A673 (cell line): ENCODE measurements at regions of chr2 and their contacts with region 1.

Region 1: DNA sequence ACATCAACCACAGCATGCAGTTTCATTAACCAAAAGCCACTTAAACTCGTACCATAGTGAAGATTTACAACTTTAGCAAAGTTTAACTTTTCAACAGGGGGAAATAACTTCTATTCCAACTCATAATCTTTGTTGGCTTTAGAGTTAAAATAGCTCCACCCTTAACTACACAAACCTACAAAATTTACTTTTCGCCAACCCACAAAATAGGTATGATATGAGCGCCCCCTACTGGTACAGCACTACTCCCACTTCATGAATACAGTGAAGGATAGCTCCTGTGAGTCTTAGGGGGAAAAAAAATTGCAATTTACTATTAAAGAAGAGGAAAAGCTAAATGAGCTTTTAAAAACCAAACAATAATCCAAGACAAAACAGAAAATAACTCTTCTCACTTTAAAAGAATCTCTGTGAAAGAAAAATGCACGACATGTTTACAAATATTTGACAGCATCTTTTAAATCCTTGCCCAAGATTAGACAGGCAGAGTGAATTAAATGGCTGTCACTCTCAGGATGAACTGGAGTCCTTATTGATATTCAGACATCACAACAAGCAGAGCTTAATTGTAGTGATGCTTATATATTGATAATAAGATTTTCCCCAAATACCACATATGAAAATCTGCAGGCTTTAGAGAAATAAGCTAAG is 32.2 kb downstream of the TMEFF2 start:
- DNase-seq: peak; percentile 87
- H3K4me3 ChIP-seq: no peak overlapping the region
- H3K27ac ChIP-seq: peak overlapping the region; percentile 18
- H3K4me1 ChIP-seq: peaks cover 20% of the 10 kb centered on the region
- H3K27me3 ChIP-seq: no peaks in the 10 kb centered on the region
- CTCF ChIP-seq: peak; percentile 96

Region 2: GRCh38 chr2:191555092-191555742 is 607.3 kb before region 1 on chr2:
- CTCF ChIA-PET with region 1: interaction called, 3 read pairs
- POLR2A ChIA-PET with region 1: no interaction called
- intact Hi-C with region 1: loop called (anchors 1 kb)
- DNase-seq: peak; percentile 90
- H3K4me3 ChIP-seq: no peak overlapping the region
- H3K27ac ChIP-seq: no peak overlapping the region
- H3K4me1 ChIP-seq: peaks cover 4% of the 10 kb centered on the region
- H3K27me3 ChIP-seq: no peaks in the 10 kb centered on the region
- CTCF ChIP-seq: peak; percentile 74

Region 3: DNA sequence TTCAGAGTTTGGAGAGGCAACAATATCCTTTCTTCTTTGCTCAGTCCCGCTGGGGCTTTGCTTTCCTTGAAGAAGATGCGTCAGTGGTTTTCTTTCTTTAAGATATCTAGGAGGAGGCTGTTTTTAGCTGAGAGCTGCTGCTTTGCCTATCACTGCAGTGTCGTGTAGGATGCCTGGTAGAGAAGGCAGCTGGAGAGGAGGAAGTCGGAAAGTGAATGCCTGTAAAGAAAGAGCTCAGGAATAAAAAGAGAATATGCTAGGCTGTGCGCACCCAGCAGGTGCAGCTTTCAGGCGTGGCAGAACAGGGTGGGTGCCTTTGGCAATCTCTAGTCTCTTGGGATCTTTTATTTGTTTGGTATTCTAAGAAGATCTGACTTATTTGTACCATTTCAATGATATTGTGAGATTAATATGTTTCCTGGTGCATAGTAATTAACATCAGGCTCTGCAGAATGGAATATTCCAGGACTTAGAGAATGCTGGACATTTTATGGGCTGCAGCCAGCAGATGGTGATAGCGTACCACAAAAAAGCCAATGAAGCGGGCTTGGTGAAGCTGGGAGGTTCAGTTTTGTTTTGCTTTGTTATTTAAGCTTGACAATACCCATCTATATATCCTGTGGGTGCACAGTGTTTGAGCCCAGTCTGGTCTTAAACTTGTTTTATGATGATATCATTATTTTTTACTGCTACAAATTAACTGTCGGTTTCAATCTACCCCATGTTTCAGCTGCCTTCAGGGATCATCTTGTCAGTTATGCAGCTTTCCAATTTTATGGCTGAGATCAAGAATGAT is 350.5 kb before region 1 on chr2:
- CTCF ChIA-PET with region 1: interaction called, 70 read pairs
- POLR2A ChIA-PET with region 1: no interaction called
- intact Hi-C with region 1: loop called (anchors 1 kb)
- DNase-seq: peak; percentile 82
- H3K4me3 ChIP-seq: no peak overlapping the region
- H3K27ac ChIP-seq: no peak overlapping the region
- H3K4me1 ChIP-seq: peaks cover 3% of the 10 kb centered on the region
- H3K27me3 ChIP-seq: no peaks in the 10 kb centered on the region
- CTCF ChIP-seq: peak; percentile 91

Region 4: DNA sequence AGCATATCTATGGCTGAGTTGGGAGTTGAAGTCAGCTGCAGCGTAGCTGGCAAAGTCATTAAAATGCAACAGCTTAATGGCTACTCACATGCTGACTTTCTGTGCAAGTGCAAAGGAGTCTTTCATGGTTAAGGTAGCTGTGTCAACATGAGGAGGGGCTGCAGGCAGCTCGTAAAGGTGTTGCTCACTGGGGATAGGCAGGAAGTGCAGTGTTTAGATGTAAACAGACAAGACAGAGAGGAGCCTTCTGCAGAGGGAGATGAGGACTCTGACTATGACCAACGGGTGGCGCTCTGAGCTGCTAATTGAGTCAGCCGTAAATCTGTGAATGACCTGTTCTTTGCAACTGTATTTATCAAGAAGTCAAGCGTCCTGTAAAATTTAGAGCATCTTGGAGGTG is 293.3 kb before region 1 on chr2:
- CTCF ChIA-PET with region 1: interaction called, 62 read pairs
- POLR2A ChIA-PET with region 1: no interaction called
- intact Hi-C with region 1: loop called (anchors 1 kb)
- DNase-seq: peak; percentile 66
- H3K4me3 ChIP-seq: no peak overlapping the region
- H3K27ac ChIP-seq: no peak overlapping the region
- H3K4me1 ChIP-seq: peaks cover 18% of the 10 kb centered on the region
- H3K27me3 ChIP-seq: no peaks in the 10 kb centered on the region
- CTCF ChIP-seq: peak; percentile 63

Region 5: DNA sequence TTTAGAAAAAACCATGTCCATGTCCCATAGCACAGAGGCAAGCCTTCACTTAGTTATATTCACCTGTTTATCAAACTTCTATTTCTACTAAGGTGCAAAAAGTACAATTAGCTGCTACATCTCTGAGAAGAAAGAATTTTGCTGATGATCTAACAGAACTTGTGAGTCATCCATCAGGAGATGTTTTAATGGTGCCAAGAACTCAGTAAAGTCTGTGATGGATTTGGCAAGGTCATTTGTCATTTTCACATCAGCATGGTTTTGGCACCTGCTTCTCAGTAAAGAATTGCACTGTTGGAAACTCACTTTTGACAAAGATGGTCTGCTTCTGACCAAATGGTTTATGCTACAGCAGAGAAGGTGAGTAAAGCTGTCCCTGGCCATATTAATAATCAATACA is 227.9 kb after region 1 on chr2:
- CTCF ChIA-PET with region 1: no interaction called
- POLR2A ChIA-PET with region 1: no interaction called
- intact Hi-C with region 1: no loop called
- DNase-seq: no peak
- H3K4me3 ChIP-seq: no peak overlapping the region
- H3K27ac ChIP-seq: no peak overlapping the region
- H3K4me1 ChIP-seq: no peaks in the 10 kb centered on the region
- H3K27me3 ChIP-seq: no peaks in the 10 kb centered on the region
- CTCF ChIP-seq: no peak

Region 6: DNA sequence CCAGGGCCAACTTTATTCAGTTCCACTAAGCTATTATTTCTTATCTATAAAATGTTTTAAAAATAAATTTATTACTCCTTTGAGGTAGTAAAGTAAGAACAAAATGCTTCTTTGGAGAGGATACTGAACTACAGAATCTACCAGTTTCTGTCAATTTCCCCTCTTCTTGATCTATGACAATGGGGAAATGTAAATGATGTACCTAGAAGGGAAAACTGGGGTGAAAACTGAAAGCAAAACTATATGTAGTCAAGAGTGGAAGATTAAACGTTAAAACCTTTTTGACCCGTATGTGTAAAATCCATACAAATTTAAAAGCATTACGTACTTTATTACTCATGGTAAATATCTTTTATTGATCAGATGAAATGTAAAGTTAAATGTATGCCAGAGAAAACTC is 1320.0 kb after region 1 on chr2:
- CTCF ChIA-PET with region 1: no interaction called
- POLR2A ChIA-PET with region 1: no interaction called
- intact Hi-C with region 1: no loop called
- DNase-seq: no peak
- H3K4me3 ChIP-seq: no peak overlapping the region
- H3K27ac ChIP-seq: no peak overlapping the region
- H3K4me1 ChIP-seq: no peaks in the 10 kb centered on the region
- H3K27me3 ChIP-seq: no peaks in the 10 kb centered on the region
- CTCF ChIP-seq: no peak